ENCODE measurements at regions of chr3 and their contacts with region 1.

Region 1: DNA sequence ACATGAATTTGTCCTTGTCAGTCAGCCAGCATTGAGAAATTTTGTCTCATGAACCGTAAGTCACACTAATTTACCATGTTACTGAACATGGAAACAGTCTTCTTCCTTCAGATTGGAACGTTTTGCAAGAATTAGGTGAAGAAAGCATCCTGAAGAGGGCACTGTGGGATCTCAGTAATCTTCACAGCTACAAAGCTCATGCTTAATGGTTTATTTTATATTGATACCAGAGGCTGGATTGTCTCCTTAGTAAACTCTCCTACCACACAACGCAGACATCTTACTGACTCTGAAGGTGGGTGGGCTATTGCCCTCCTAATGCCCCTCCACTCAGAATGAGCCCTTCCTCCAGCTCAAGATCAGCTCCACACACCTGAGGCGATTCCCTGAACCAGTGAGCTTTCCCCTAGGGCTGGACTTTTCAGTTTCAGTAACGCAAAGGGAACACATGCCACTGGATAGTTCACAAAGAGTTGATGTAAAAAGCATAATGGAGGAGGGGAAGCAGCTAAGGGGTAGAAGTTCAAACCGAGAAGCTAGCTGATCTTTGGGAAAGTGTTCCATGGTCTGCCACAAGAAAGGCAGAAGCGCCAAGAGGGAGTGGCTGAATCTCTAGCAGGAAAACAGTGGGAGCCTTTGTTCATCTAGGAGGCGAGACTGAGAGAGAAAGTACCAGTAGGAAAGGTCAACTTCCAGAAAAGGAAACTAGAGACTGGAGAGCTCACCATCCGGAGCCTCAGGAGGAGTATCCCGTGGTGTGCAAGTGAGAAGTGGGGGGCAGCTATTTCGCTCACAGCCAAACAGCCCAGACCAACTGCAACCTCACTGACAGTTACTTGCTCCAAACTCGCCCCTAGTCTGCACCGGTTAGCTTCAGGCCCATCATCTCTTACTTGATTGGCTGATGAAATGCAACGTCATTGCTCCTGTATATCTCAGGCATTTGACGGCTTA is at the start of gene SLC9C1:
- DNase-seq: peak; percentile 79
- ATAC-seq: peak; percentile 67
- H3K4me3 ChIP-seq: peak within 1 kb of the TSS; percentile 25 to 53 (median 41)
- H3K4me3 Mint-ChIP-seq: peak within 1 kb of the TSS; percentile 81
- H3K27ac ChIP-seq: peak within 1 kb of the TSS; percentile 30 to 45
- H3K27ac Mint-ChIP-seq: peak within 1 kb of the TSS; percentile 78
- H3K4me1 ChIP-seq: peaks cover 20 to 21% of the 10 kb centered on the region in 2 donors
- H3K4me1 Mint-ChIP-seq: peaks cover 30% of the 10 kb centered on the region
- H3K27me3 ChIP-seq: no peaks in the 10 kb centered on the region
- H3K27me3 Mint-ChIP-seq: no peaks in the 10 kb centered on the region
- CTCF ChIP-seq: peak; percentile 68
- total RNA-seq, gene SLC9C1: 0.41 and 0.49 TPM in 2 replicates

Region 2: GRCh38 chr3:112111785-112112402 is 181.8 kb before region 1 on chr3:
- CTCF ChIA-PET with region 1: interaction called, 84 read pairs
- POLR2A ChIA-PET with region 1: interaction called, 5 read pairs
- intact Hi-C with region 1: loop called (anchors 1 kb)
- DNase-seq: peak; percentile 88
- ATAC-seq: peak; percentile 84
- H3K4me3 ChIP-seq: no peak overlapping the region
- H3K4me3 Mint-ChIP-seq: no peak overlapping the region
- H3K27ac ChIP-seq: no peak overlapping the region
- H3K27ac Mint-ChIP-seq: no peak overlapping the region
- H3K4me1 ChIP-seq: peaks cover 42 to 47% of the 10 kb centered on the region in 2 donors
- H3K4me1 Mint-ChIP-seq: peaks cover 41% of the 10 kb centered on the region
- H3K27me3 ChIP-seq: no peaks in the 10 kb centered on the region
- H3K27me3 Mint-ChIP-seq: no peaks in the 10 kb centered on the region
- CTCF ChIP-seq: peak; percentile 92

Region 3: GRCh38 chr3:112136959-112137693 is 156.5 kb before region 1 on chr3:
- CTCF ChIA-PET with region 1: interaction called, 50 read pairs
- POLR2A ChIA-PET with region 1: no interaction called
- intact Hi-C with region 1: no loop called
- DNase-seq: peak; percentile 70
- ATAC-seq: no peak
- H3K4me3 ChIP-seq: no peak overlapping the region
- H3K4me3 Mint-ChIP-seq: peak overlapping the region; percentile 13
- H3K27ac ChIP-seq: no peak overlapping the region
- H3K27ac Mint-ChIP-seq: peak overlapping the region; percentile 15
- H3K4me1 ChIP-seq: peaks cover 51 to 52% of the 10 kb centered on the region in 2 donors
- H3K4me1 Mint-ChIP-seq: peaks cover 56% of the 10 kb centered on the region
- H3K27me3 ChIP-seq: no peaks in the 10 kb centered on the region
- H3K27me3 Mint-ChIP-seq: no peaks in the 10 kb centered on the region
- CTCF ChIP-seq: peak; percentile 75

Region 4: GRCh38 chr3:112314649-112315048 is 21.0 kb after region 1 on chr3:
- CTCF ChIA-PET with region 1: interaction called, 33 read pairs
- POLR2A ChIA-PET with region 1: interaction called, 5 read pairs
- intact Hi-C with region 1: no loop called
- DNase-seq: no peak
- ATAC-seq: no peak
- H3K4me3 ChIP-seq: no peak overlapping the region
- H3K4me3 Mint-ChIP-seq: no peak overlapping the region
- H3K27ac ChIP-seq: no peak overlapping the region
- H3K27ac Mint-ChIP-seq: no peak overlapping the region
- H3K4me1 ChIP-seq: no peaks in the 10 kb centered on the region
- H3K4me1 Mint-ChIP-seq: peaks cover 7% of the 10 kb centered on the region
- H3K27me3 ChIP-seq: no peaks in the 10 kb centered on the region
- H3K27me3 Mint-ChIP-seq: no peaks in the 10 kb centered on the region
- CTCF ChIP-seq: no peak

Region 5: DNA sequence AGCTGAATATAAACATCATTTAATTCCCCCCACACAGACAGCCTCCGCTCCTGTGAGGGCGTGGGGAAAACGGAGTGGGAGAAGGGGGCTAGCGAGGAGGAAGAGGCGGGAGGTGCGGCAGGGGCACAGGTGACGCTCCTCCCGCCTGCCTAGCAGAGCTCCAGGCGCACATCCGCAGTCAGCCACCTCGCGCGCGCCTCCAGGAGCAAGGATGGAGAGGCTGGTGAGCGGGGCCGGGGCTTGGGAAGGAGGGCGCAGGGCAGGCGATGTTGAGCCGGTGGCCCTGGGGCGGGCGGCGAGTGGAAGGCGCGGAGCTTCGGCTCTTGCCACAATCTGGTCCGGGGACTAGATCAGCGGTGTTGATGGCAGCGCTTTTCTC is 39.3 kb after region 1 on chr3 and contains the start of gene CD200:
- CTCF ChIA-PET with region 1: interaction called, 49 read pairs
- POLR2A ChIA-PET with region 1: no interaction called
- intact Hi-C with region 1: no loop called
- DNase-seq: peak; percentile 64
- ATAC-seq: peak; percentile 77
- H3K4me3 ChIP-seq: peak within 1 kb of the TSS; percentile 65 to 93 (median 89)
- H3K4me3 Mint-ChIP-seq: peak within 1 kb of the TSS; percentile 94
- H3K27ac ChIP-seq: peak within 1 kb of the TSS; percentile 70 to 83
- H3K27ac Mint-ChIP-seq: peak within 1 kb of the TSS; percentile 95
- H3K4me1 ChIP-seq: peaks cover 29 to 31% of the 10 kb centered on the region in 2 donors
- H3K4me1 Mint-ChIP-seq: peaks cover 50% of the 10 kb centered on the region
- H3K27me3 ChIP-seq: no peaks in the 10 kb centered on the region
- H3K27me3 Mint-ChIP-seq: no peaks in the 10 kb centered on the region
- CTCF ChIP-seq: no peak
- total RNA-seq, gene CD200: 35.0 and 36.0 TPM in 2 replicates

Region 6: DNA sequence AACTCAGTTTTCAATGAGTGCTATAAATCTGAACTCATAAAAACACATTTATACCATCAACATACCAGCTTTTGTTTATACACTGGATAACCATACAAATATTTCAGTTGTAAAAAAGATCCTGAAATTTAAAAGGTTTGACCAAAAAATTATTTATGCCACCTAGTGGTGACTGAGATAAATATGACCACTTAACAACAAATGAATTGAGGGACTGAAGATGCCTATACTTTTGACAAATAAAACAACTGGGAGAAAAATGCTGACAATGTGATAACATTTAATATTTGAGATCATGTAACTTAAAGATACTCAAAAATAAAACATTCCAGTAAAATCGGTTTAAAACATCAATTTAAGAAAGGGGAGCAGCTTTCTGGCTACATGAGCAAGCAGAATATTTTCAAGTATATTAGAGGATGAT is 237.7 kb after region 1 on chr3:
- CTCF ChIA-PET with region 1: interaction called, 85 read pairs
- POLR2A ChIA-PET with region 1: no interaction called
- intact Hi-C with region 1: loop called (anchors 1 kb)
- DNase-seq: peak; percentile 57
- ATAC-seq: no peak
- H3K4me3 ChIP-seq: no peak overlapping the region
- H3K4me3 Mint-ChIP-seq: no peak overlapping the region
- H3K27ac ChIP-seq: peak overlapping the region in 1 of 2 donors; percentile 18
- H3K27ac Mint-ChIP-seq: peak overlapping the region; percentile 22
- H3K4me1 ChIP-seq: no peaks in the 10 kb centered on the region
- H3K4me1 Mint-ChIP-seq: peaks cover 5% of the 10 kb centered on the region
- H3K27me3 ChIP-seq: no peaks in the 10 kb centered on the region
- H3K27me3 Mint-ChIP-seq: no peaks in the 10 kb centered on the region
- CTCF ChIP-seq: peak; percentile 82

Region 7: GRCh38 chr3:112593258-112593657 is 299.6 kb after region 1 on chr3:
- CTCF ChIA-PET with region 1: no interaction called
- POLR2A ChIA-PET with region 1: no interaction called
- intact Hi-C with region 1: no loop called
- DNase-seq: no peak
- ATAC-seq: no peak
- H3K4me3 ChIP-seq: no peak overlapping the region
- H3K4me3 Mint-ChIP-seq: no peak overlapping the region
- H3K27ac ChIP-seq: no peak overlapping the region
- H3K27ac Mint-ChIP-seq: no peak overlapping the region
- H3K4me1 ChIP-seq: peaks cover 0 to 12% of the 10 kb centered on the region in 2 donors
- H3K4me1 Mint-ChIP-seq: peaks cover 12% of the 10 kb centered on the region
- H3K27me3 ChIP-seq: no peaks in the 10 kb centered on the region
- H3K27me3 Mint-ChIP-seq: no peaks in the 10 kb centered on the region
- CTCF ChIP-seq: no peak

Region 8: DNA sequence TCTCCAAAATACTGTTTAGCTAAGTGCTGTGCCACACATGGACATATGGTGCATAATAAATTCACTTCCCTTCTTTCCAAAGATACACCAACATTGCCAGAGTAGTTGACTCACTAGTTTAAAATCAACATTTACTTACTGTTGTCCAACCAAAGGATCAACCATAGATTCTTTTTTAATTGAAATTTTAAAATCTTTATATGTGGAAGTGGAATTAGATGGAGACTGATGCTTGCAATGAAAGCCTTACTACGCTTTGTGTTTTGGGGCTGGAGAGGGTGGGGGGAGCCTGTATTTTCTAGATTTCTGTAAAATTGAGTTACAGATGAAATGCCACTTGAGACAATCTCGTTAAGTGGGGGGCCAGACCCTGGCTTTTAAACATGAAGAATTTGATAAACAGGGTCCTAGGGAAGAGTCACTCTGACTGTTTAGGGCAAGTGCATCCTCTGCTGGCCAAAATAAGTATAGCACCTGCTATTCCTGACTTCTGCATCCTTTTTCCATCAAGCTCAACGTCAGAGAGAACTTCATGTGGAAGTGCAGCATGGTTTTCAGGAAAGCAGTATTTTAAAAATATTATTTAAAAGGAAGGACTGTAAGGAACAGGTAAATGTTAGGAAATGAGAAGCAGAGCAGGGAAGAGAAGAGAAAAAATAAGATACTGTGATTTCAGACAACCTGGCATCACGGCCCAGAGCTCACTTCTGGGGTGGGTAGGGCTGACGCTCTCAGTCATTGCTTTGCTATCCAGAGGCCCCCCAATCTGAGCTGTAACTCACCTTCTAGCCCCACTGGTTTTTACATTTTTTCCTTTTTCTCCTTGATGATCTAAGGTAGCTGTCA is 994.4 kb after region 1 on chr3:
- CTCF ChIA-PET with region 1: interaction called, 3 read pairs
- POLR2A ChIA-PET with region 1: no interaction called
- intact Hi-C with region 1: loop called (anchors 5 kb)
- DNase-seq: peak; percentile 69
- ATAC-seq: peak; percentile 69
- H3K4me3 ChIP-seq: no peak overlapping the region
- H3K4me3 Mint-ChIP-seq: no peak overlapping the region
- H3K27ac ChIP-seq: no peak overlapping the region
- H3K27ac Mint-ChIP-seq: no peak overlapping the region
- H3K4me1 ChIP-seq: no peaks in the 10 kb centered on the region
- H3K4me1 Mint-ChIP-seq: no peaks in the 10 kb centered on the region
- H3K27me3 ChIP-seq: no peaks in the 10 kb centered on the region
- H3K27me3 Mint-ChIP-seq: no peaks in the 10 kb centered on the region
- CTCF ChIP-seq: peak; percentile 100